Kidney (tissue), 22 donors: ENCODE measurements at regions of chr12 and their contacts with region 1.

Region 1: DNA sequence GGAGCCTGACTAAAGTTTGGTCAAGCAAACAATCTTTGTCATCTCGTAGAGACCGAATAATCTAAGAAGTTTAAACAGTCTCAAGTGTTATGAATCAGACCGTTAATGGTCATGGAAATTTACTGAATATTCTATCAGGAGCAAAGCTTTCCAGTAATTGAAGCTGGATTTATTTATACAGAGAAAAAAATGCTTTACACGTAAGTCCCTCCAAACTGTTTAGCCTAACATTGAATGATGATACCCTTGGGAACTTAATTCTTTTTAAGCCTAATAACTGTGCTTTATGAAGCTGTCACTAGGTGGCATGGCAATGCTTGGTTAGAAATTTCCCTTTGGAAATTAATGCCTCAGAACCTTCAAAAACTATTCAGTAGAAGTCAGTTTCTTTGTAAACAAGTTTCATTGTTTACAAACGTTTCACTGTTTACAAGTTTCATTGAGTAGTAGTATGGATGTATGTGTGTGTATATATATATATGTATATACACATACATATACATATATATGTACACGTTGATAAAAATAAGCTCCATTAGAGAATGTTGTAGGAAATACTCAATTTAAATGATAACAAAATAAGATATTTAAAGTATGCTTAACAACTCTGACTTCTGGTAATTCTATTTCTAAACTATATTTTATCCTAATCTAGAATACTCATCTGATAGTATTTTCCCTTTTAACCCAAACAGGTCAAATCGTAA is 32.1 kb downstream of the DEPDC4 start:
- DNase-seq: peak in 2 of 5 donors; percentile 60 to 77
- H3K4me3 ChIP-seq: no peak overlapping the region
- H3K27ac ChIP-seq: no peak overlapping the region
- H3K4me1 ChIP-seq: no peaks in the 10 kb centered on the region
- H3K27me3 ChIP-seq: no peaks in the 10 kb centered on the region
- CTCF ChIP-seq: peak; percentile 68

Region 2: GRCh38 chr12:100427078-100427477 is 192.3 kb after region 1 on chr12:
- intact Hi-C with region 1: no loop called
- DNase-seq: no peak
- H3K4me3 ChIP-seq: no peak overlapping the region
- H3K27ac ChIP-seq: no peak overlapping the region
- H3K4me1 ChIP-seq: no peaks in the 10 kb centered on the region
- H3K27me3 ChIP-seq: no peaks in the 10 kb centered on the region
- CTCF ChIP-seq: no peak

Region 3: DNA sequence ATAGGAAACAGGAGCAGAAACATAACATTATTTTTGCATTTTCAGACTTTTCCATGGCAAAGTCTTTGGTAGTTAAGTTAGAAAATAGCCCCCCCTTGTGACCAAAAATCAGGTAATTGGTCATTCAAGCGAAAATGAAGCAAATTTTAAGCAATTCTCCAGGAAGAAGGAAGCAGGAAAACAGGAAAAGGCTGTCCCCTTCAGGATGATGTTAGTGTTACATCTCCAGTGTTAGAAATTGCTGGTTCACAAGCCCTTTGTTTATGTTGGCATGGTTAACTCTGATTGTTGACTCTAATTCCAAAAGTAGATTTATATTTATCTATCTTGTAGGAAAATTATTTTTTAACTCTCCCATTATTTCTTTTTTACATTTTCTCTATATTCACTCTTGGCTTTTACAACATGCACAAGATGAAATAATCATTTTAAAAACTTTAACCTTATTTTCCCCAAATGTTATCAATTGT is 319.9 kb after region 1 on chr12:
- intact Hi-C with region 1: loop called (anchors 10 kb)
- DNase-seq: peak in 3 of 5 donors; percentile 63 to 95 (median 94)
- H3K4me3 ChIP-seq: no peak overlapping the region
- H3K27ac ChIP-seq: no peak overlapping the region
- H3K4me1 ChIP-seq: peaks cover 0 to 3% (median 0%) of the 10 kb centered on the region in 3 donors
- H3K27me3 ChIP-seq: no peaks in the 10 kb centered on the region
- CTCF ChIP-seq: peak; percentile 90